MCF 10A (cell line): ENCODE measurements at regions of chr22 and their contacts with region 1.

Region 1: GRCh38 chr22:37019309-37020125 is at the starts of genes MPST and TST:
- DNase-seq: peak; percentile 62
- H3K4me3 Mint-ChIP-seq: peak within 1 kb of the TSS; percentile 91
- H3K27ac Mint-ChIP-seq: peak within 1 kb of the TSS; percentile 88
- H3K4me1 Mint-ChIP-seq: peaks cover 22% of the 10 kb centered on the region
- H3K27me3 Mint-ChIP-seq: no peaks in the 10 kb centered on the region
- CTCF ChIP-seq: no peak
- total RNA-seq, gene MPST: 40.7 and 51.2 TPM in 2 replicates
- total RNA-seq, gene TST: 16.2 and 16.4 TPM in 2 replicates

Region 2: DNA sequence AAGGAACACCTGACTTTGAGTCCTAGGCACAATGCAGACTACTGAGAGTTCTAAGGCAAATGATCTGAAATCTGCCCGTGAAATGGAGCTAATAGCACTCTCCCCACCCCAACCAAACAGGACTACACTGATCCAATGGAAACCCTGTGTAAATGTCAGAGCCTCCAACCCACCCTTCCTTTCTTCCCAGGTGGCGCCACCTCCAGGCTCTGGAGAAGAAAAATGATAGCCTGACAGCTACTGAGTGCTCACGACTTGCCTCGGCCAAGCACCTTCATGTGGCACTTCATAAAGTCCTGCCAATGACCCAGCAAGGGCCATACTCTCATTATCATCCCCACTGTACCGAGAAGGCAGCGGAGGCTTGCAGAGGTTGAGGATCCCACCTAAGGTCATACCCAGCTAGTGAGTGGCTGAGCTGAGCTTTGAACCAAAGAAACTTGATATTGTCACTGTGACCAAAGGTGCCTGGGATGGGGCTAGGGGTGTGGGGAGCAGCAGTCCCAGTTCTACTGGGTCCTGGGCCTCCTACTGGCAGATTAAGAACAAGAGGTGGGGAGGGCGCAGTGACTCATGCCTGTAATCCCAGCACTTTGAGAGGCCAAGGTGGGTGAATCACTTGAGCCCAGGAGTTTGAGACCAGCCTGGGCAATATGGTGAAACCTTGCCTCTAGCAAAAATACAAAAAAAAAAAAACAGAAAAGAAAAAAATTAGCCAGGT is 20.7 kb before region 1 on chr22:
- CTCF ChIA-PET with region 1: interaction called, 6 read pairs
- POLR2A ChIA-PET with region 1: interaction called, 11 read pairs
- intact Hi-C with region 1: no loop called
- DNase-seq: peak; percentile 78
- H3K4me3 Mint-ChIP-seq: no peak overlapping the region
- H3K27ac Mint-ChIP-seq: peak overlapping the region; percentile 79
- H3K4me1 Mint-ChIP-seq: peaks cover 12% of the 10 kb centered on the region
- H3K27me3 Mint-ChIP-seq: no peaks in the 10 kb centered on the region
- CTCF ChIP-seq: peak; percentile 6

Region 3: DNA sequence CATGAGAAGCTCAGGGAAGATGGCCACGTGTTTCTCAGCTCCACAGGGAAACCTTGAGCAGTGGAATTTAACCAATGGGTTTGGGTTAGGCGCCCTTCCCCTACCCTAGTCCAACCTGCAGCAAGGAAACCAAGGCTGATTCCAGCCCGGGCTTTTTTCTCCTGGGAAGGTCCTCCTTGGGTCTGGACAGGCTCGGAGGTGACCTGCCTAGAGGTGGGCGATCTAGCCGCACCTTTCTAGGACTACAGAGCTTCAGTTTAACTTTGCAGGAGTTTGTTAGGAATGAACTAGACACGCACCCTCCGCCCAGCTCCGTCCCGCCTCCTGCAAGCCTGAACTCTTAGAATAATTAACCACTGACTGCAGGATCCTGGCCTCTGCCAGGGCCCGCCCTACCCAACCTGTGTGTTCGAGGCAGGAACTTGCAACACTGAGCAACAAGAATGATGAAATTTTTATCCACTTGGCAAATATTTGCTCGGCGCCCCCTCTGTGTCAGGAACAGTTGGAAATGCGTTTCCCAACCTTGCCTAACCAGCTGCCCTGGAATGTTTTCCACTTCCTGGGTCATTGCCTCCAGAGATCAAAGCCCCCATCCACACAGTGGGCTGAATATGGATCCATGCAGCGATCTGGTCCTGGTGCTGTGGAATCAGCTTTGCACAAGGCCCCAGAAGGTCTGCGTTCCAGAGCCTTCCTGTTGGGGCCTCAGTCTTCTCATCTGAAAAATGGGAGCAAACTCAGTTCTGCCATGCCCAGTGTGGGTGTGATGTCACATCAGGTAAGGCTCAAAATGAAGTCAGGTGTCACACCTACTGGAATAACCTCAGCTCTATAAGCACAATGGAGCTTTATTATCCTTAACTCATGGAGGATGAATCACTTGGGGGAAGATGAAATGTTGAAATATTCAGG is 13.3 kb after region 1 on chr22:
- CTCF ChIA-PET with region 1: interaction called, 20 read pairs
- POLR2A ChIA-PET with region 1: interaction called, 95 read pairs
- intact Hi-C with region 1: no loop called
- DNase-seq: peak; percentile 96
- H3K4me3 Mint-ChIP-seq: peak overlapping the region; percentile 33
- H3K27ac Mint-ChIP-seq: peak overlapping the region; percentile 78
- H3K4me1 Mint-ChIP-seq: peaks cover 17% of the 10 kb centered on the region
- H3K27me3 Mint-ChIP-seq: no peaks in the 10 kb centered on the region
- CTCF ChIP-seq: no peak